Caco-2 (cell line): ENCODE measurements at regions of chr6 and their contacts with region 1.

Region 1: DNA sequence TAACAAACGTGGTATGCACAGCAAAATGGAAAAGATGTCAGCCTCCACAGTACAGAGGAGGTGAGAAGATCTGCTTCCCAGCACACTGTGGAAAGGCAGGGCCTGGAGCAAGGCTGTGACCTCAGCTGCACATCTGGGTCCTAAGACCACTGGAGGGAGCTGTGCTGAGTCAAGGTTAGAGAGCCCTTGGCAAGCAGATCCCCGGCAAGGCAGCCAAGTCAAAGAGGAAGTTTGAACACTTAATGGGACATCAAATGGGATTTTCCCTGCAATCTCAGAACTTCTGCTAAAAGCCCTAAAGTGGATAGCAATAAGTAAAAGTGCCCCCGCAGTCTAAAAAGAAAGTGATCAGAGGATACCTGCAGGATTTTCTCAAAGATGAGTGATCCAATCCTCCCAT is 39.5 kb downstream of the UNC5CL start:
- DNase-seq: peak; percentile 61 to 73
- H3K4me3 ChIP-seq: no peak overlapping the region
- H3K4me3 Mint-ChIP-seq: no peak overlapping the region
- H3K27ac Mint-ChIP-seq: peak overlapping the region; percentile 99
- H3K4me1 ChIP-seq: peaks cover 44% of the 10 kb centered on the region
- H3K4me1 Mint-ChIP-seq: peaks cover 53% of the 10 kb centered on the region
- H3K27me3 ChIP-seq: no peaks in the 10 kb centered on the region
- H3K27me3 Mint-ChIP-seq: no peaks in the 10 kb centered on the region
- CTCF ChIP-seq: peak in 1 of 2 experiments; percentile 44

Region 2: DNA sequence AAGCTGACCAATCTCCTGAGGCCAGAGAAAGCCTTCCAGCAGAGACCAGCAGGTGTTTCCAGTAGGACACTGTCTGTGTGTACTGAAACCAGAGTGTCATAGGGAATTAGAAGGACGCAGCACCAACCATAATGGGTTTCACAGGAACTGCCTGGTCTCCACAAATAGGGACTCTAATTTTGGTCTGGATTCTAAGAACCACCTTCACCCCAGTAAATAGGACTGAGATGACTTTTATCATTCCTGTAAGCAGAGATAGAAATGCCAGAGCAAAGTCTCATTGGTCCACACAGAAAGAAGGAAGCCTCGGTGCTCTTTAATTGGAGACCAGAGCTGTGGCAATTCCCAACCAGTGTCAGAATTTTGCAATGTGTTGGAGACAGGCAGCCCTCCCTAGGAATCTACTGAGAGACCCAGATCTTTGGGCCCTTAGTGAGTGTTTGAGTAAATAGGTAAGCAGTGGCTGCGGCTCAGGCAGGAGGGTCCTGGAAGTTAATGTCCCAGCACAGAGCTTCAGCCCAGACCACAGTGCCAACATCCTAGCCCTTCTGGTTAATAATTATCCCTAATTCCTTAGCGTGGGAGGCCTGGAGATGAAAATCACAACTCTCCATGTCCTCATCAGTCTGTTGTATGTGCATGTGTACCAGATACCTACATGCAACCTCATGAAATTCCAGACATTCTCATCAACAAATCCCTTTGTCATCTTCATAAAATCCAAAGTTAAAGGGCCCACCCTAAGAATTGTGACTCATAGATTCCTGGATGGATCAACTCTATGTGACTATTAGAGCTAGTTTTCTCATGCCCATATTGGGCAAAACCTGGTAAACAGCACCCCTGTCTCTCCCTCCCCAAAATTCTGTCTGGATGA is 41.7 kb before region 1 on chr6:
- CTCF ChIA-PET with region 1: interaction called, 3 read pairs
- POLR2A ChIA-PET with region 1: interaction called, 5 read pairs
- intact Hi-C with region 1: loop called (anchors 2 kb)
- DNase-seq: peak; percentile 42 to 52
- H3K4me3 ChIP-seq: no peak overlapping the region
- H3K4me3 Mint-ChIP-seq: no peak overlapping the region
- H3K27ac Mint-ChIP-seq: peak overlapping the region; percentile 63
- H3K4me1 ChIP-seq: peaks cover 35% of the 10 kb centered on the region
- H3K4me1 Mint-ChIP-seq: peaks cover 31% of the 10 kb centered on the region
- H3K27me3 ChIP-seq: no peaks in the 10 kb centered on the region
- H3K27me3 Mint-ChIP-seq: no peaks in the 10 kb centered on the region
- CTCF ChIP-seq: no peak

Region 3: DNA sequence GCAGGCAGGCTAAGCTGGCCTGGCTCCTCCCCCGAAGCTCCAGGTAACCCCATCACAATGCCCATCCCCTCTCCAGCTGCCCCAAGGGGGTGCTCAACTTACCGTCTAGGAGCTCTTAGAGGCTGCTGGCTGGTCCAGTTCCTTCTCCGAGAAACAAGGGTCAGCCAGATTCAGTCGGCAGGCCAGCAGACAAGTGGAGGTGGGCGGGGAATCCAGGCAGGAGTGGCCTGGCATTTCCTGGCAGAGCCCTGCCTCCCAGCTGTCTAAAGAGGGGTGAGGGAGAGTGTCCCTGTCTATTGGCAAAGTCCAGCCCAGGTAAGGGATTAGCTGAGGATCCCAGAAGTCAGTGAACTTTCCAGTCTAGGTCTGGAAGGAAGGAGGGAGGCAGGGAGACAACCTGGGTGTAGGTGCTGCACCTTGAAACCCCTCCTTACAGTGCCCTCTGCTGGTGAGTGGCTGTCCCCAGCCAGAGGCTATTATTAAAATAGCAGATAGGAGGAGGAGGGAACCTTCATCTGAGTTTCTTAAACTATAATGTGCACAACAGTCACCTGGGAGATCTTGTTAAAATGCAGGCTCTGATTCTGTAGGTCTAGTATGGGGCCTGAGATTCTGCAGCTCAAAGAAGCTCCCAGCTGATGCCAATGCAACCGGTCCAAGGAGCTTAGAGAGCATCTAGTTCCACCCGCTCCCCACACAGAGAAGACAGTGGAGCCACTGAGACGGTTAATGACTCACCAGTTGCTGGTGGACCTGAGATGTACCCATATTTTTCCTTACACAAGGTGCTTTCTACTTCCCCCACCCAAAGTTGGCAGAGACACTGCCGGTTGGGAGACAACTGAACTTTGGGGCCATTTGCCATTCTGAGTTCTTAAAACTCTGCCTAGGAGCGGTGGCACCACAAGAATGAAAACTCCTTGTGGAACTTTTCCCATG is 39.8 kb after region 1 on chr6 and contains the start of gene UNC5CL:
- CTCF ChIA-PET with region 1: interaction called, 19 read pairs
- POLR2A ChIA-PET with region 1: interaction called, 19 read pairs
- intact Hi-C with region 1: loop called (anchors 2 kb)
- DNase-seq: peak; percentile 83 to 84
- H3K4me3 ChIP-seq: no peak within 1 kb of the TSS
- H3K4me3 Mint-ChIP-seq: peak within 1 kb of the TSS; percentile 63
- H3K27ac Mint-ChIP-seq: peak within 1 kb of the TSS; percentile 96
- H3K4me1 ChIP-seq: peaks cover 59% of the 10 kb centered on the region
- H3K4me1 Mint-ChIP-seq: peaks cover 41% of the 10 kb centered on the region
- H3K27me3 ChIP-seq: no peaks in the 10 kb centered on the region
- H3K27me3 Mint-ChIP-seq: no peaks in the 10 kb centered on the region
- CTCF ChIP-seq: peak; percentile 57 to 65
- total RNA-seq, gene UNC5CL: 4.5 and 5.5 TPM in 2 replicates